Natural killer cell (primary cell): ENCODE measurements at regions of chr20 and their contacts with region 1.

Region 1: GRCh38 chr20:57329608-57330221 is at the start of gene SPO11:
- DNase-seq: no peak
- ATAC-seq: peak in 1 of 3 donors; percentile 30
- H3K4me3 ChIP-seq: no peak within 1 kb of the TSS
- H3K4me3 Mint-ChIP-seq: no peak within 1 kb of the TSS
- H3K27ac ChIP-seq: no peak within 1 kb of the TSS
- H3K27ac Mint-ChIP-seq: no peak within 1 kb of the TSS
- H3K4me1 ChIP-seq: no peaks in the 10 kb centered on the region
- H3K4me1 Mint-ChIP-seq: peaks cover 6 to 7% of the 10 kb centered on the region in 2 donors
- H3K27me3 ChIP-seq: peaks cover 18% of the 10 kb centered on the region
- H3K27me3 Mint-ChIP-seq: peaks cover 23 to 54% of the 10 kb centered on the region in 2 donors
- CTCF ChIP-seq: no peak
- total RNA-seq, gene SPO11: not detected

Region 2: GRCh38 chr20:57089691-57090150 is 240.0 kb before region 1 on chr20:
- intact Hi-C with region 1: loop called (anchors 5 kb)
- DNase-seq: peak; percentile 37 to 62
- ATAC-seq: peak in 2 of 3 donors; percentile 63 to 71
- H3K4me3 ChIP-seq: no peak overlapping the region
- H3K4me3 Mint-ChIP-seq: no peak overlapping the region
- H3K27ac ChIP-seq: no peak overlapping the region
- H3K27ac Mint-ChIP-seq: peak overlapping the region; percentile 81 to 87
- H3K4me1 ChIP-seq: peaks cover 13% of the 10 kb centered on the region
- H3K4me1 Mint-ChIP-seq: peaks cover 21 to 24% of the 10 kb centered on the region in 2 donors
- H3K27me3 ChIP-seq: no peaks in the 10 kb centered on the region
- H3K27me3 Mint-ChIP-seq: peaks cover 0 to 3% of the 10 kb centered on the region in 2 donors
- CTCF ChIP-seq: peak; percentile 45